ENCODE measurements at regions of chr2 and their contacts with region 1.

Region 1: DNA sequence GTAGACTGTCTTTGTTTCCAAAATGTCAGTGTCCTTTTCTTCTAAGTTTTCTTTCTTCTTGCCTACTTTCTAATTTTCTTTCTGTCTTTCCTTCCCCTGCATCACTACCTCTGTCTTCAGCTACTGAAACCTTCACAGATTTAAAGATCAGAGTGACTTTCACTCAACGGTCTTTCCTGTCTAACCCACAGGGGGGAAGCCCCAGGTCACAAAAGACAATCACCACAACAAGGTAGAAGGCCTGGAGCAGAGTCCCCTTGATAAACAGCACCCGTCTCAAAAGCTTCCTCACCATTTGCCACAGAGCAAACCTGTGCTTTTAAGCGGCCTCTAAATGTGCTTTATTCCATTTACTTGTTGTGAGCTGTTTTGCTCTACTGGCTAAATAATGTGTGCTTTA is 665.4 kb downstream of the BCL11A start:
- DNase-seq: peak; percentile 78
- H3K4me3 Mint-ChIP-seq: peak overlapping the region; percentile 31
- H3K27ac Mint-ChIP-seq: peak overlapping the region; percentile 6
- H3K4me1 Mint-ChIP-seq: peaks cover 50% of the 10 kb centered on the region
- H3K27me3 Mint-ChIP-seq: no peaks in the 10 kb centered on the region

Region 2: DNA sequence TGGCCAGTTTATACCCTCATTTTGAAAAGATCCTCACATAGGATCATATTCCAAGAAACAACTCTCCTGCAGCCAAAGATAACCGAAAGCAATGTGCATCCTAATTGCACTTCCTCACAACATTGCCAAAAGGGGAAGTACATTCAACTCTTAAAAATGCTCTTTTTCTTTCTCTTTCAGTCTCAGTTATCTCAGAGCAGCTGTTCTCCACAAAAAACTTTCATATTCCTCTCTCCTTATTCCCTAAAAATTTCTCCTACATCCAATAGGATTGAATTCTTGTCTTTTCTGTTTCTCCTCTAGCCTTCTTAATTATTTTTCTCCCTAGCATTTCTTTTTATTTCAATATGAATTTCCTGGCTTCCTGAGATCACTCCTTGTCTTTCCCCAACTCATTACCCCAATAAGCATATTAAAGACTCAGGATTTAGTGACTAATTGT is 1848.8 kb before region 1 on chr2:
- CTCF ChIA-PET with region 1: no interaction called
- intact Hi-C with region 1: loop called (anchors 10 kb)
- DNase-seq: no peak
- H3K4me3 Mint-ChIP-seq: no peak overlapping the region
- H3K27ac Mint-ChIP-seq: peak overlapping the region; percentile 57
- H3K4me1 Mint-ChIP-seq: peaks cover 20% of the 10 kb centered on the region
- H3K27me3 Mint-ChIP-seq: no peaks in the 10 kb centered on the region

Region 3: DNA sequence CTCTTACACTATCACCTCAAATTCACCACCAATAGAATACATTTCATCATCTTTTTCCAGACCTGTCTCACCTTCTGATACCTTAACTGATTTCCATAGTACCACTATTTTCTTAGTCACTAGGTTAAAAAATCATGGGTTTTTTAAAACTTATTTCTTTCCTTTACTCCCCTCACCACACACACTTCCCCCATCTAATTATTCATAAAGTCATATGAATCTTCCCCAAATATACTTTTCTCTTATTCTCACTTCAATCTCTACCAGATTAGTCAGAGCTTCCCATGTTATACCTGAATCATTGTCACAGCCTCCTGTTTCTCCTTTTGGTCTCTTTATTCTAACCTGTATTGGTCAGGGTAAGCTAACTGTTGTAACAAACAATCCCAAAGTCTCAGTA is 30.9 kb before region 1 on chr2:
- CTCF ChIA-PET with region 1: no interaction called
- intact Hi-C with region 1: loop called (anchors 2 kb)
- DNase-seq: no peak
- H3K4me3 Mint-ChIP-seq: no peak overlapping the region
- H3K27ac Mint-ChIP-seq: no peak overlapping the region
- H3K4me1 Mint-ChIP-seq: peaks cover 9% of the 10 kb centered on the region
- H3K27me3 Mint-ChIP-seq: no peaks in the 10 kb centered on the region

Region 4: DNA sequence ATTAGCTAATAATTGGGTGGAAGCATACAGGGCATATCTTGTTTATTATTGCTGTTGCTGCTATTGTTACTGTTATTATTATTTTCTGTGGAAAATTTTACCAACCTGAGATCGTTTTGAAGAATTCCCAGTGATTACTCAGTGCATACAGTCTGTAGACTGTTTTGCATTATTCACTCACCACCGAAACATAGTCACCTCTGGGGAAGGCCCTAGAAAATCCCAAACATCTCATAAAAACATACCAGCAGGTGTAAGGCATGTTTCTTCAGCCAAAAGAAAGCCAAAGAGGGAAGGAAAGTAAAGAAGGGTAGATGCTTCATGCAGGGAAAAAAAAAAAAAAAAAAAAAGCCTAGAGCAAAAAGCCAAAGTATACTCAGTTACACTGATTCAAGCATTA is 17.7 kb after region 1 on chr2:
- CTCF ChIA-PET with region 1: interaction called, 3 read pairs
- intact Hi-C with region 1: loop called (anchors 1 kb)
- DNase-seq: no peak
- H3K4me3 Mint-ChIP-seq: no peak overlapping the region
- H3K27ac Mint-ChIP-seq: no peak overlapping the region
- H3K4me1 Mint-ChIP-seq: peaks cover 18% of the 10 kb centered on the region
- H3K27me3 Mint-ChIP-seq: no peaks in the 10 kb centered on the region

Region 5: GRCh38 chr2:59912042-59912441 is 24.0 kb after region 1 on chr2:
- CTCF ChIA-PET with region 1: interaction called, 3 read pairs
- intact Hi-C with region 1: loop called (anchors 1 kb)
- DNase-seq: no peak
- H3K4me3 Mint-ChIP-seq: no peak overlapping the region
- H3K27ac Mint-ChIP-seq: no peak overlapping the region
- H3K4me1 Mint-ChIP-seq: peaks cover 18% of the 10 kb centered on the region
- H3K27me3 Mint-ChIP-seq: no peaks in the 10 kb centered on the region

Region 6: GRCh38 chr2:60104514-60105505 is 216.8 kb after region 1 on chr2:
- CTCF ChIA-PET with region 1: no interaction called
- intact Hi-C with region 1: loop called (anchors 5 kb)
- DNase-seq: peak; percentile 30
- H3K4me3 Mint-ChIP-seq: peak overlapping the region; percentile 53
- H3K27ac Mint-ChIP-seq: no peak overlapping the region
- H3K4me1 Mint-ChIP-seq: peaks cover 15% of the 10 kb centered on the region
- H3K27me3 Mint-ChIP-seq: peaks cover 3% of the 10 kb centered on the region

Region 7: DNA sequence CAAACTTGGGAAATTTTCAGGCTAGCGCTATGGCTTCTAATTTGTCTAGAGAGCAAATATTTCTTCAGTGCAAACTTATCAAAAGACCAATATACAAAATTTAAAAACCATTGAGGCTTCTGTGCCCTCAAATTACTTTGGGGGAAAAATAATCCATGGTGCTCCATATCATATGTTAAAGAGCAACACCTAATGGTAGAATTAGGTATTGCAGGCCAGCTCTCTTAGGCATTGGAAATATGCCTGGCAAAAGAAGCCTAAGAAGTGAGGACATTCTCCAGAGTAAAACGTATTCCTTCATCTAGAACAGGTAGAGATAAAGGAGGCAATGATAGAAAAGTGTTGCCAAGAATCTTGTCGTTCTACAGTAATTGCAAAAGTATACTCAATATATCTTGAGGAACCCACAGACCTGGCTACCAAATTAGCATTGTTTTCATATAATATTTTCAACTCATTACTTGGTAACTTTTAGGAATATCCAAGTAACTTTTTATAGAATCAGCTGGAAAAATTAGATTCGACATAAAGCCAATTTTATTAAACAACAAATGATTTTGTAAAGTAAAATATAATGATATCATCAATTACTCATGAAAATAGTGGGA is 264.3 kb after region 1 on chr2:
- CTCF ChIA-PET with region 1: no interaction called
- intact Hi-C with region 1: loop called (anchors 5 kb)
- DNase-seq: no peak
- H3K4me3 Mint-ChIP-seq: no peak overlapping the region
- H3K27ac Mint-ChIP-seq: no peak overlapping the region
- H3K4me1 Mint-ChIP-seq: no peaks in the 10 kb centered on the region
- H3K27me3 Mint-ChIP-seq: no peaks in the 10 kb centered on the region